Activated CD4-positive, alpha-beta memory T cell treated with anti-CD3 and anti-CD28 coated beads for 36 hours (primary cell): ENCODE measurements at regions of chr17 and their contacts with region 1.

Region 1: GRCh38 chr17:75289115-75289831 is at the start of gene SLC25A19:
- DNase-seq: peak; percentile 99
- H3K4me3 Mint-ChIP-seq: peak within 1 kb of the TSS; percentile 96
- H3K27ac Mint-ChIP-seq: peak within 1 kb of the TSS; percentile 100
- H3K4me1 Mint-ChIP-seq: peaks cover 21% of the 10 kb centered on the region
- H3K27me3 Mint-ChIP-seq: no peaks in the 10 kb centered on the region
- total RNA-seq, gene SLC25A19: 57.9 to 62.3 TPM

Region 2: DNA sequence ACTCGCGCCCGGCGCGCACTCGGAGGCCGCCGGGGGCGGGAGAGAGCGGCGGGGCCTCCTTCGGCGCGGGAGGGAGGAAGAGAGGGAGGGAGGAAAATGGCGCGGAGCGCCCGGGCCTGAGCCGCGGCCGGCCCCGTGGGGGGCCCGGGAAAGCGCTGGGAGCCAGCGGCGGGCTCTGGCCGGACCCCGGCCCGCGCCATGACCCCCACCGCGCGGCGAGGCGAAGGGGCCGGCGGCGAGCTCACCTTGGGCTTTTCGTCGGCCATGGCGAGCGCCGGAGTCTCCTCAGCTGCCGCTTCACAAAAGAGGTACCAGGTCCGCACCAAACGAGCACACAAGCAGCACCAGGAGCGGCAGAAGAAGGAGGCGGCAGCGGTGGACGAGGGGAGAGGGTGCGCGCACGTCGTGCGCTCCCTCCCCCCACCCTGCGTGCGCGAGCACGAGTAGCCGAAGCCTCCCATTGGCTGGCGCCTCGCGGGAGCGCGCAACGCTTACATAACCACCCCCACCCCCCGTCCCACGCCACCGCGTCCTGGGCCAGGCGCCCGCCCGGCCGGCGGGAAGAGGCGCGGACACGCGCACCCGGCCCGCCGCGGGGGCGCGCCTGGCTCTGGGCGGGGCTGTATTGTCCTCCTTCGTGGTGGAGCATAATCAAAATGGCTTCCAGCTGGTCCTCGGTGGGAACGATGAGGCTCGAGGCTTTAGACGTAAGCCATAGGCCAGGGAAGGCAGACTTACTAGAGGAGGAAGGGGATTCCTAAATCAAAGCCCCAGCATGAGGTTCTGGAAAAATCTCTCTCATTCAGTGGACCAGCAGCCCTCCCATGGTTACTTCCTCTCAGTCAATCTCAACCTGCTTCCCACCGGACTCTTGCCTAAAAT is 106.5 kb before region 1 on chr17 and contains the start of gene SUMO2:
- CTCF ChIA-PET with region 1: no interaction called
- POLR2A ChIA-PET with region 1: no interaction called
- intact Hi-C with region 1: loop called (anchors 5 kb)
- DNase-seq: peak; percentile 97
- H3K4me3 Mint-ChIP-seq: peak within 1 kb of the TSS; percentile 91
- H3K27ac Mint-ChIP-seq: peak within 1 kb of the TSS; percentile 97
- H3K4me1 Mint-ChIP-seq: peaks cover 30% of the 10 kb centered on the region
- H3K27me3 Mint-ChIP-seq: no peaks in the 10 kb centered on the region
- total RNA-seq, gene SUMO2: 610 to 612 TPM

Region 3: DNA sequence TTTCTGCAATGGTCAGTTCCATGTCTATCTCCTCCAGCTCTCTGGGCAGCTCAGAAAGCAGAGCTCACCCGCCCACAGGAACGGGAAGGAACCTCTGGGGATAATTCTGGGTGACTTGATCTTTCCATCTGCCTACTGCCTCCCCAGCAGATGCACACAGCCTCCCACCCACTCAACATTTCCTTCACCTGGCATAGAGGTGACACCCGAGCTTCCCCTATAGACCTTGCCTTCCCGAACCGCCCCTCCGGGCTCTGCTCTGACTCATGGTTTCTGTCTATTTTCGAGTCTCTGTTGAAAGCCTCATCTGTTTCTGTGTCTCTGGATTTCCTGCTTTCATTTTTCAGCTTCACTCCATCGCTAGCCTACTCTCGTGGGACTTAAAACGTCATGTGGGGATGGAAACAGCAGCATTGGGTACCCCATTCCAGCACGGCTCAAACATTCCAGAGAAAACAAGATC is 39.2 kb before region 1 on chr17:
- CTCF ChIA-PET with region 1: interaction called, 8 read pairs
- POLR2A ChIA-PET with region 1: interaction called, 3 read pairs
- intact Hi-C with region 1: loop called (anchors 1 kb)
- DNase-seq: peak; percentile 91
- H3K4me3 Mint-ChIP-seq: peak overlapping the region; percentile 58
- H3K27ac Mint-ChIP-seq: peak overlapping the region; percentile 90
- H3K4me1 Mint-ChIP-seq: peaks cover 64% of the 10 kb centered on the region
- H3K27me3 Mint-ChIP-seq: no peaks in the 10 kb centered on the region

Region 4: GRCh38 chr17:75271233-75271954 is 17.9 kb before region 1 on chr17:
- CTCF ChIA-PET with region 1: interaction called, 56 read pairs
- POLR2A ChIA-PET with region 1: interaction called, 40 read pairs
- intact Hi-C with region 1: loop called (anchors 1 kb)
- DNase-seq: peak; percentile 91
- H3K4me3 Mint-ChIP-seq: peak overlapping the region; percentile 75
- H3K27ac Mint-ChIP-seq: peak overlapping the region; percentile 63
- H3K4me1 Mint-ChIP-seq: peaks cover 31% of the 10 kb centered on the region
- H3K27me3 Mint-ChIP-seq: no peaks in the 10 kb centered on the region

Region 5: DNA sequence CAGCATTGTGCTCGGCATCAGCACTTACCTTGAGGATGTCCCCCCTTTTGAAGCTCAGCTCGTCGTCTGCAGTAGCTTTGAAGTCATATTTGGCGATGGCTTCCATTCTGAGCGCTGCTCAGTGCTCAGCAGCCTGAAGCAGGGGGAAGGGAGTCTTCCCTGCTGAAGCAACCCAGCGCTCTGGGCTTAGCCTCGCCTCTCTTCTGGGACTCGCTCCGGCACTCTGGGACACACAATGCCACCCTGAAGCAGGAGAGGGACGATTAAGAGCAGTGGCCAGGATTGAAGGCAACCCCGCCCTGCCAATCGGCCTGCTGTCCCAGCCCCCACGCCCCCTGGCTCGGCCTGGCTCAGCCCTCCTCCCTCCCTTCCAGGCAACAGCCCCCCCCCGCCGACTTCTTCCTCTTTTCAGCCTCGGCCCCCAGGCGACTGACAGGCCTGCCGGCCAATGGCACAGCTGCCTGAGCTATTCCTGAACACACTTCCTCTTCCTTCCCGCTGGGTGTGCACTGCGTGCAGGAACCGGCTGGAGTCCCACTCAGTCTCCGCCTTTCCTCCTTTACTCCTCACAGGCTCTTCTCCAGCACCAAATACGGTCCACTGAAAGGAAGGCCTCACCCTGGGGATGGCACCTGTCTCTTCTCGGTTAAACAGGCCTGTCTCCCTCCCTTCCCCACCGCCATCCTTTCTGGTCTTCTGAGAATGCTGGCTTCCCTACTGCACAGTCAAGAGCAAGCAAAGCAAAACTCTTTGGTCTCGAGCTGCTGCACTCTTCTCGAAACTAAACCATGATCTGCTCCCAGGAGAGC is 104.5 kb after region 1 on chr17:
- CTCF ChIA-PET with region 1: interaction called, 8 read pairs
- POLR2A ChIA-PET with region 1: interaction called, 11 read pairs
- intact Hi-C with region 1: no loop called
- DNase-seq: peak; percentile 91
- H3K4me3 Mint-ChIP-seq: peak overlapping the region; percentile 96
- H3K27ac Mint-ChIP-seq: peak overlapping the region; percentile 85
- H3K4me1 Mint-ChIP-seq: peaks cover 76% of the 10 kb centered on the region
- H3K27me3 Mint-ChIP-seq: no peaks in the 10 kb centered on the region

Region 6: DNA sequence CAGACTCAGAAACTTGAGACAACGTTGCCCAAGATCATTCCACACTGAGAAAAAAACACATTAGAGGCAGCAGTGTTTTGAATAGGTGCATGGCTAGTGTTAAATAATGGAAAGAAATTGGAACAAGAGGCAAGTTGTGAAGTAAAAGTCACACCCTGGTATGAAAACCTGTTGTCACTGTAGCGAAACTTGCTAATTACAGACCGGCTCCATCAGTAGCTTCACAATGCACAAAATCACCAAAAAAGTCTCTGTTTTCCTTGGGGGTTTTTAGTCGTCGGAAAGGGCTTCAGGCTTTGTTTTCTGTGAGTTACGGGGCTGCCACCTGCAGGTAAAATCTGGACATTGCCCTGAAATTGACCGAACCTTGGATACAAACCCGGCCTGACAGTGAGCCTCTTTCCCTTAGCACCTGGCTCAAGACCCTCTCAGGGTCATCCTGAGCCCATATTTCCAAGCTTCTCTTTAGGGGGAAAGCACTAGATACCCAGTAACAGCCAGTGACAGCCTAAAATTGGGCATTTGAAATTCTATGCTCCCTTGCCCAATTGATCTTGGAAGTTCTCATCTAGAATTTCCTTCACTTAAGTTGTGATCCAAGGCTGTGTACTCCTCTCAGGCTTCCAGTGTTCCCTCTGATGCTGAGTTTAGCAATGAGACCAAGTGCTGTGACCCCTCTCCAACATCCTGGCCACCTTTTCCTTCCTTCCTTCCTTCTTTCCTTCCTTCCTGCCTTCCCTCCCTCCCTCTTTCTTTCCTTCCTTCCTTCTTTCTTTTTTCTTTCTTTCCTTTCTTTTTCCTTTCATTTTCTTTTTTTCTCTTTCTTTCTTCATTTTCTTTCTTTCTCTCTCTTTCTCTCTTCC is 123.4 kb after region 1 on chr17:
- CTCF ChIA-PET with region 1: interaction called, 13 read pairs
- POLR2A ChIA-PET with region 1: interaction called, 3 read pairs
- intact Hi-C with region 1: loop called (anchors 1 kb)
- DNase-seq: peak; percentile 86
- H3K4me3 Mint-ChIP-seq: peak overlapping the region; percentile 49
- H3K27ac Mint-ChIP-seq: peak overlapping the region; percentile 19
- H3K4me1 Mint-ChIP-seq: peaks cover 16% of the 10 kb centered on the region
- H3K27me3 Mint-ChIP-seq: peaks cover 1% of the 10 kb centered on the region

Region 7: GRCh38 chr17:75784473-75785015 is 495.3 kb after region 1 on chr17 and contains the start of gene UNK:
- CTCF ChIA-PET with region 1: no interaction called
- POLR2A ChIA-PET with region 1: no interaction called
- intact Hi-C with region 1: loop called (anchors 10 kb)
- DNase-seq: peak; percentile 97
- H3K4me3 Mint-ChIP-seq: peak within 1 kb of the TSS; percentile 90
- H3K27ac Mint-ChIP-seq: peak within 1 kb of the TSS; percentile 98
- H3K4me1 Mint-ChIP-seq: peaks cover 35% of the 10 kb centered on the region
- H3K27me3 Mint-ChIP-seq: peaks cover 1% of the 10 kb centered on the region
- total RNA-seq, gene UNK: 21.8 to 24.7 TPM